ENCODE measurements at regions of chr9 and their contacts with region 1.

Region 1: DNA sequence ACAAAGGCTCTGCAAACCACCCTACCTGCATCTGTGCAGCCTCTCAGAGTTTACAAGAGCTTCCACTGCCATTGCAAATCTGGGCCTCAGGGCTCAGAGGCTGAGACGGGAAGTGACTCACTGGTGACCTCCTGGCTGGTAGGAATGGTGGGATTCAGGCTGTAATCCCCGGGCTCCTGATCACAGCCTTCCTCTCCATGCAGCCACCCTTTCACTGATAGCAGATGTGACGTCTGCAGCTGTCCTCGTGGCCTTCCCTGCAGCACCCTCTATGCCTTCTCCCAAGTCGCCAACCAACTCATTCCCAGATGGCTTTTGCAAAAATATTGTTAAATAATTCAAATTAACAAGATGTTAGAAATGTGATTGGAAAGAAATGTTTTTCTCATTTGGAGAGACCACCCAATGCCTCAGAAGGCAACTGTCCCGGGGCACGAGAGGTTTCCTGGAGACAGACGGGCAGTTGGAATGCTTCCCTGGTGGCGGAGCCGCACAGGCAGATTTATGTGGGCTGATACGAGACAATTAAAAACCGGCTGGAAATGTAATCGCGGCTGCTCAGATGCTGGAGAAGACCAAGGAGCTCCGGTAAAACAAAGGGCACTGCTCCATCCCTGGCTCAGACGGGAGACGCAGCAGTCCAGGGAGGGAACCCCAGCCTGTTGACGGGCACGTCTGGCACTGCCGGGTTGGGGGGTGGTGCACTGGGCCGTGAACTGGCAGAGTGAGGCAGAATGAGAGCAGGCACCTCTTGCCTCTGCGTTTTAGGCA is 34.4 kb upstream of the SLC25A51 start:
- DNase-seq: no peak
- ATAC-seq: no peak
- H3K4me3 Mint-ChIP-seq: no peak overlapping the region
- H3K27ac Mint-ChIP-seq: no peak overlapping the region
- H3K4me1 Mint-ChIP-seq: no peaks in the 10 kb centered on the region
- H3K27me3 Mint-ChIP-seq: no peaks in the 10 kb centered on the region

Region 2: GRCh38 chr9:37889536-37889935 is 48.8 kb before region 1 on chr9:
- CTCF ChIA-PET with region 1: no interaction called
- POLR2A ChIA-PET with region 1: no interaction called
- intact Hi-C with region 1: no loop called
- DNase-seq: no peak
- ATAC-seq: no peak
- H3K4me3 Mint-ChIP-seq: no peak overlapping the region
- H3K27ac Mint-ChIP-seq: no peak overlapping the region
- H3K4me1 Mint-ChIP-seq: peaks cover 5% of the 10 kb centered on the region
- H3K27me3 Mint-ChIP-seq: no peaks in the 10 kb centered on the region

Region 3: DNA sequence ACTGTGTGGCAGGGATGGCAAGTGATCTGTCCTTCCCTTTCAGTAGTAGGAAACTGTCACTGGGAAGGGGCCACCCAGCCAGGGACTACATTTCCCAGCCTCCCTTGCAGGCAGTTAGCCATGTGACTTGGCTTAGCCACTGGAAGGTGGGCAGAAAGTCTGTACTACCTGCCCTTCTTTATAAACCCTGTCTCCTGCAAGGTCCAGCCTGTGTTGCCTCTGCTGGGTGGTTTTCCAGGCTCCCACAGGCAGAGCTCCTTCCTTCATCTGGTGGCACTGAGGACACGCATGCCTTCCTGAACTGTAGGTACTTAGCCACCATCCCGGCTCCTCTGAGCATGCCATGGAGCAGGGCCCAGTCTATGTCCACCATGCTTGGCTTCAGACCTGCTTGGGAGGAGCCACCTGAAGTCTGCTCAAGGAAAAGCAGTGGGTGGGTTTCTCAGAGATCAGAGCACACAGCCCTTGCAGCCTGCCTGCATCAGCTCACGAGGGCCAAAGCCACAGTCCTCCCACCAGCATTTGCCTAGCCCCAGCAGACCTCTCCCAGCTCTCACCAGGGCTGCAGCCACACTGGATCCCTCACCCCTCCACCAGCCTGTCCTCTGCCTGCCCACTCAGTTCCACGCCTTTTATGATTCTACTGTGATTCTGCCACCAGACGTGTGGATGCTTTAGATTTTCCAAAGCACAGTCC is 17.7 kb before region 1 on chr9:
- CTCF ChIA-PET with region 1: no interaction called
- POLR2A ChIA-PET with region 1: no interaction called
- intact Hi-C with region 1: no loop called
- DNase-seq: peak; percentile 54
- ATAC-seq: peak; percentile 84
- H3K4me3 Mint-ChIP-seq: no peak overlapping the region
- H3K27ac Mint-ChIP-seq: no peak overlapping the region
- H3K4me1 Mint-ChIP-seq: no peaks in the 10 kb centered on the region
- H3K27me3 Mint-ChIP-seq: no peaks in the 10 kb centered on the region

Region 4: GRCh38 chr9:37953775-37954437 is 15.6 kb after region 1 on chr9:
- CTCF ChIA-PET with region 1: no interaction called
- POLR2A ChIA-PET with region 1: no interaction called
- intact Hi-C with region 1: loop called in 1 of 2 experiments (anchors 2 kb)
- DNase-seq: peak; percentile 76
- ATAC-seq: peak; percentile 84
- H3K4me3 Mint-ChIP-seq: peak overlapping the region; percentile 1
- H3K27ac Mint-ChIP-seq: peak overlapping the region; percentile 70
- H3K4me1 Mint-ChIP-seq: peaks cover 31% of the 10 kb centered on the region
- H3K27me3 Mint-ChIP-seq: no peaks in the 10 kb centered on the region

Region 5: GRCh38 chr9:38651400-38652042 is 713.2 kb after region 1 on chr9:
- CTCF ChIA-PET with region 1: no interaction called
- POLR2A ChIA-PET with region 1: no interaction called
- intact Hi-C with region 1: no loop called
- DNase-seq: peak; percentile 28
- ATAC-seq: peak; percentile 89
- H3K4me3 Mint-ChIP-seq: no peak overlapping the region
- H3K27ac Mint-ChIP-seq: no peak overlapping the region
- H3K4me1 Mint-ChIP-seq: peaks cover 2% of the 10 kb centered on the region
- H3K27me3 Mint-ChIP-seq: peaks cover 11% of the 10 kb centered on the region